Sigmoid colon (tissue), 7 donors: ENCODE measurements at regions of chr14 and their contacts with region 1.

Region 1: GRCh38 chr14:90624728-90625400 is 191.4 kb downstream of the TTC7B start:
- DNase-seq: no peak
- H3K4me3 ChIP-seq: no peak overlapping the region
- H3K27ac ChIP-seq: peak overlapping the region; percentile 71 to 84 (median 76)
- H3K4me1 ChIP-seq: peaks cover 0 to 58% (median 52%) of the 10 kb centered on the region in 4 donors
- H3K27me3 ChIP-seq: no peaks in the 10 kb centered on the region
- CTCF ChIP-seq: no peak
- EP300 ChIP-seq: no peak
- POLR2A ChIP-seq: no peak

Region 2: DNA sequence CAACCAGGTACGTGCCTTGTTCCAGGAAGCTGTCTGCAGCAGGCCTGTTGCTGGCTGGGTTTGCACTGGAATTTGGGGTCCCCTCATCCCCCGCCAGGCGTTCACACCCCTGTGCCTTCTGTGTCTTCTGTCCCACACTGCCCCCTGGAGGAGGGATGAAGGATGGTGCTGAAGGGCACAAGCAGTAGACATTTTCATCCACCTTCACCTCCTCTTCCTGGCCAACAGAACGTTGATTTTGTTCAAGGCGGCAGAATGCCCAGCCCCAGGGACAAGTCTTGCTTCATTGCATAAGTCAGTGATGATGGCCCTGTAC is 106.0 kb before region 1 on chr14:
- intact Hi-C with region 1: no loop called
- DNase-seq: no peak
- H3K4me3 ChIP-seq: no peak overlapping the region
- H3K27ac ChIP-seq: peak overlapping the region; percentile 70 to 90 (median 80)
- H3K4me1 ChIP-seq: peaks cover 0 to 74% (median 63%) of the 10 kb centered on the region in 4 donors
- H3K27me3 ChIP-seq: no peaks in the 10 kb centered on the region
- CTCF ChIP-seq: peak in 3 of 4 experiments; percentile 14 to 43 (median 30)
- EP300 ChIP-seq: no peak
- POLR2A ChIP-seq: no peak

Region 3: DNA sequence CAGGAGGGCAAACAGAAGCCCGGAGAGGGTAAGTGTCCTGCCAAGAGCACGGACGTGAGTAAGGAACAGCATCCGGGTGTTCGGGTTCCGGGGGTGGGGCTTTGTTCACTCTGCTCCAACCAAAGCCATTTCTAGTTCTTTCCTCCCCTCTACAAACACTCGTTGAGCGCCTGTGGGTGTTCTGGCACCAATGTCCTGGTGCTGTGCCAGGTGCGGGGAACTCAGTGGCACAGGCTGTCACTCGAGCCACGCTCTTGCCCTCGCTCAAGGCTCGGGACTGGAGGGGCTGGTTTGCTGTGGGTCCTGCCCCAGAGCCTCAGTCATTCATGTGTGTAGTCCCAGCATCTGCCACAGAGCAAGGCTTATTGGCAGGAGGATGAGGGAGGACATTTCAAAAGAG is 70.5 kb before region 1 on chr14:
- intact Hi-C with region 1: loop called (anchors 5 kb)
- DNase-seq: peak; percentile 79
- H3K4me3 ChIP-seq: no peak overlapping the region
- H3K27ac ChIP-seq: peak overlapping the region; percentile 73 to 89 (median 84)
- H3K4me1 ChIP-seq: peaks cover 0 to 79% (median 73%) of the 10 kb centered on the region in 4 donors
- H3K27me3 ChIP-seq: no peaks in the 10 kb centered on the region
- CTCF ChIP-seq: no peak
- EP300 ChIP-seq: no peak
- POLR2A ChIP-seq: no peak

Region 4: DNA sequence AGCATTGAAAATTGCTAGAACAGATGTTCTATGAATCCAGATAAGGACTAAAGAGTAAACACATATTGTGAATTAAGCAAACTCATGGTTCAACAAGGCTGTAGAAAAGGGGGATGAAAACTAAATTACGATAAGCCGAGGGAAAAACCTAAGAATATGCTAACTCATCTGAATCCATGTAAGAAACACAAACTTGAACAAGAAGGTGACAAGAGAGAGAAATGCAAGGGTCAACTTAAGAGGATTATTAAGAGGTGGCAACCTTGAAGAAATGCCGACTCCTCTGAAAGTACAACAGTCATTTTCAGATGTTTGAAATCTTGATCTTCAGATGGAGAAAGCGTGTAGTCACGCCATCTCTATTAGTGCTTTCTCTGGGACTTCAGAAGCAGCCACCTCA is 62.8 kb after region 1 on chr14:
- intact Hi-C with region 1: no loop called
- DNase-seq: no peak
- H3K4me3 ChIP-seq: no peak overlapping the region
- H3K27ac ChIP-seq: no peak overlapping the region
- H3K4me1 ChIP-seq: peaks cover 0 to 7% (median 0%) of the 10 kb centered on the region in 4 donors
- H3K27me3 ChIP-seq: no peaks in the 10 kb centered on the region
- CTCF ChIP-seq: no peak
- EP300 ChIP-seq: no peak
- POLR2A ChIP-seq: no peak

Region 5: DNA sequence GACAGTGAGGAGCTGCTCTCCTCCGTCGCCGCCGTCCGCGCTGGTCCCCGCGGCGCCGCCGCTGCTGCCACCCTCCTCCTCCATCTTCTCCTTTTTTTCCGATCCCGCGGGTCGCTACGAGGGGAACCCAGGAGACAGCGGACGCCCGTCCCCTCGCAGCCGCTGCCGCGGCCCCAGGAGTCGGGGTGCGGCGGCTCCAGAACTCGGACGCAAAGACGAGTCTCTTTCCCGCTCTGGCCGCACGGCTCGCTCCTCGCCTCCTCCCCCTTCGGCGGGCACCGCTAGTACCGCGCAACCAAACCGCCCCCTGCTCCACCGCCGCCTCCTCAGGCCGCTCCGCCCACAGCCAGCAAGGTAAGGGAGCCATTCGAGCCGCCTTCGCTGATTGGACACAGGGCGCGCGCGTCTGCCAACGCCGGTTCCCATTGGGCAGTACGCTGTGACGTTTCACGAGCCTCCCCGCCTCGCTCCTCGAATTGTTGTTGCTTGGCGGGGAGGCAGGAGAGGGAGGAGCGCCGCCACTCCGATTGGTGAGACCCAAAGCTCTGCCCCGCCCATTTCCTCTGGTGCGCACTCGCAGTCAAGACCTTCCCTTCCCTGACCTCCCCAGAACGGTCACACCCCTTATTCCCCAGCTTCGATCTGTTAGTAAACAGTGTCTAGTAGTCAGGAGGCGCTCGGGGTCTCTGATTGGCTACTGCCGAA is 435.6 kb after region 1 on chr14 and contains the start of gene RPS6KA5:
- intact Hi-C with region 1: no loop called
- DNase-seq: peak; percentile 100
- H3K4me3 ChIP-seq: peak within 1 kb of the TSS; percentile 75 to 96 (median 94)
- H3K27ac ChIP-seq: peak within 1 kb of the TSS; percentile 98 to 99 (median 98)
- H3K4me1 ChIP-seq: peaks cover 0 to 67% (median 41%) of the 10 kb centered on the region in 4 donors
- H3K27me3 ChIP-seq: no peaks in the 10 kb centered on the region
- CTCF ChIP-seq: peak in 2 of 4 experiments; percentile 27 to 30
- EP300 ChIP-seq: peak in 1 of 4 donors; percentile 29
- POLR2A ChIP-seq: peak; percentile 87 to 91
- total RNA-seq, gene RPS6KA5: 18.2 to 36.4 (median 25.9) TPM